Activated CD8-positive, alpha-beta T cell treated with anti-CD3 and anti-CD28 coated beads for 36 hours (primary cell): ENCODE measurements at regions of chr2 and their contacts with region 1.

Region 1: DNA sequence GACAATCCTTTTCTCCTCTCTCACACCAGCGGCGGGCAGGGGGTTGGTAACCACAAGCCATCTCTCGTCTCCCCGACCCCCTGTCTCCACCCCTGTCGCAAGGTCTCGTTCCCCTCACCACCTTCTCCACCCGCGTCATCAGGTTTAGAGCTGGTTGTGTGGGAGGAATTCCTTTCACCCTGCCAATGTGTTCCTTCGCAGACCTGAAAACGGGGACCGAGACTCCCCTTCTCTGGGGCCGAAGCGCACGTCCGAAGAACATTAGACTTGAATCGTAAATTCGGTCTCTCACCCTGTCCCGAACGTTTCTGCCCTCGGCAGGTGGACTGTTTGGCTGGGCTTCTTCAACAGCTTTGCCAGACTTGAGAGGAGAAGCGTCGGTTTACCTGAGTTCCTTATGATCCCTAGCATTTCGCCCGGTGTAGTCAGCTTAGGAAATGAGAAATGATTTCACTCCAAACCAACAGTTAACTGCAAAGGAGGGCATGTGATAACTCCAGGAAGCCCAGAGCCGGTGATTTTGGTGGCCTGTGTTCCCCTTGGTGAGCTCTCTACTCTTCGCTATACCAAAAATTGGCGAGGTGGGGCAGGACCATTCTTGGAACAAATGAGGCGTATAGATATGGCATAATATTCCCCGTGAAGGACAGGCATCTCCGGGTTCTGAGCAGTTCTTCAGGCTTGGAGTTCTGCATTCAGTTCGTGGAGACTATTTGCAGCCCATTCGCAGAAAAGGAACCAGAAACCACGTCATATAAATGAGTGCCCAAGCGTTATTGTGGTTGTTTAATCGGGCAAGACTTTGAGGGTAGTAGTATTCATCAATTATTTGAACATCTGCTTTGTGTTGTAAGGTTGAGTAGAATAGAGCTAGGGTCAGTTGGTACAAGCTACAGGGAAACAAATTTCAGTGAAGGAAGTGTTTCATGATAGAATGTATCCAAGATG is 694 bp downstream of the CFAP36 start:
- DNase-seq: peak; percentile 33
- ATAC-seq: peak; percentile 12
- H3K4me3 Mint-ChIP-seq: peak overlapping the region; percentile 98
- H3K27ac Mint-ChIP-seq: peak overlapping the region; percentile 95
- H3K4me1 Mint-ChIP-seq: peaks cover 7% of the 10 kb centered on the region
- H3K27me3 Mint-ChIP-seq: no peaks in the 10 kb centered on the region
- CTCF ChIP-seq: no peak

Region 2: GRCh38 chr2:55575591-55575990 is 55.4 kb after region 1 on chr2:
- CTCF ChIA-PET with region 1: no interaction called
- POLR2A ChIA-PET with region 1: no interaction called
- intact Hi-C with region 1: no loop called
- DNase-seq: no peak
- ATAC-seq: no peak
- H3K4me3 Mint-ChIP-seq: no peak overlapping the region
- H3K27ac Mint-ChIP-seq: no peak overlapping the region
- H3K4me1 Mint-ChIP-seq: no peaks in the 10 kb centered on the region
- H3K27me3 Mint-ChIP-seq: no peaks in the 10 kb centered on the region
- CTCF ChIP-seq: no peak

Region 3: DNA sequence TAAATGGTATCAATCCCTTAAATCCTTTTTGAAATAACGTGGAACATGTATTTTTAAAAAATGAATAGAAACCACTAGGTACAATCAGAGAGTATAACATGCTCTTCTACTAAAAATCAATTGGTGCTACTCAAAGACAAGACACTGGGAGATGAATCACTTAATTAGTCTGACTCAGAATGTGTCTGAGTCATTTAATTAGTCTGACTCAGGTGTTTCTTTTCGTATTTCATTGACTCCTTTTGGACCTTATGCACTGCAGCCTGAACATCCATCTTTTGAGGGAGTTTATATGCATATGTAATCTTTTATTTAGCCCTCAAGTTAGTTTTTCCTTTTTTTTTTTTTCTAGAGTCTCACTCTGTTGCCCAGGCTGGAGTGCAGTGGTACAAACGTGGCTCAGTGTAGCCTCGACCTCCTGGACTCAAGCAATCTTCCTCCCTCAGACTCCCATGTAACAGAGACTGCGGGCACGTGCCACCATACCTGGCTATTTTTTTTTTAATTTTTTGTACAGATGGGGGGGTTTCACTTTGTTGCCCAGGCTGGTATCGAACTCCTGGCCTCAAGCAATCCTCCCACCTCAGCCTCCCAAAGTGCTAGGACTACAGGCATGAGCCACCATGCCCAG is 70.7 kb after region 1 on chr2:
- CTCF ChIA-PET with region 1: no interaction called
- POLR2A ChIA-PET with region 1: no interaction called
- intact Hi-C with region 1: no loop called
- DNase-seq: no peak
- ATAC-seq: peak; percentile 95
- H3K4me3 Mint-ChIP-seq: no peak overlapping the region
- H3K27ac Mint-ChIP-seq: peak overlapping the region; percentile 64
- H3K4me1 Mint-ChIP-seq: peaks cover 40% of the 10 kb centered on the region
- H3K27me3 Mint-ChIP-seq: no peaks in the 10 kb centered on the region
- CTCF ChIP-seq: no peak

Region 4: DNA sequence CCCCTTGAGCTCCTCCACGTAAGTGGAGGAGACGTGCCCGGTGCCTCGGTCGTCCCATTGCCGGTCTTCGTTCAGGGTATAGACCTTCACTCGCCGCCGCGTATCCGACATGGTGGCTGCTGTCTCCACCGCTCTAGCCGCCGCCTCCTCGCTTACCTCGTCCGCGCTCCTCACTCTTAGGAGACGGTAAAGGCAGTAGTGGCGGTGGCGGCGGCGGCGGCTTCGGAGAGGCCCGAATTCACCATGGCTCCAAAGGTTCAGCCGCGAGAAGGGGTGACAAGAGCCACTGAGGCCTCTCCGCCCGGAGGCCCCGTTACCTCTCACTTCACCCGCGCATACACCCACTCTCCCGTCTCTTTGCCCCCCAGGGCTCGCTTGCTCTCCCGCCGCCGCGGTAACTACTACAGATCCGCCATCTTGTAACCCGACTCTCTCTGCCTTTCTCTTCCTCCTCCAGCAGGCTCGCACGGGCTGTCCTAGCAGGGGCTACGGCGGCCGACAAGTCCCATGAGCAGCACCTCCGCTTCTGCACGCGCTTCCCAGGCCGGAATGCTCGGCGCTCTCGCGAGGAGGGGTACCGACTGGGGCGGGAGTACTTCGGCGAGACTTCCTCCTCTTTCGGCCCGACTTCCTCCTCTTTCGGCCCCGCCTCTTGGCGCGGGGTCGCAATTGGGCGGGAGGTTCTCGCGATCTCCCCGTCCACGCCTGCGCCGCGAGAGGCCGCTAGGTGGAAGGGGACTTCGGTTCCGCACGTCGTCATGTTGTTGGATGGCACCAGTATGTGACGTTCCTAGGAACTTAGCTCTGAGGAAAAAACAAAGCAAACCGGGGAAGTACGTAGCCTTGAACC is 97.2 kb after region 1 on chr2 and contains the start of gene PPP4R3B:
- CTCF ChIA-PET with region 1: interaction called, 5 read pairs
- POLR2A ChIA-PET with region 1: interaction called, 10 read pairs
- intact Hi-C with region 1: loop called (anchors 5 kb)
- DNase-seq: peak; percentile 98
- ATAC-seq: peak; percentile 90
- H3K4me3 Mint-ChIP-seq: no peak within 1 kb of the TSS
- H3K27ac Mint-ChIP-seq: no peak within 1 kb of the TSS
- H3K4me1 Mint-ChIP-seq: peaks cover 49% of the 10 kb centered on the region
- H3K27me3 Mint-ChIP-seq: no peaks in the 10 kb centered on the region
- CTCF ChIP-seq: no peak
- total RNA-seq, gene PPP4R3B: 70.5 to 80.6 TPM